ENCODE measurements at regions of chr6 and their contacts with region 1.

Region 1: DNA sequence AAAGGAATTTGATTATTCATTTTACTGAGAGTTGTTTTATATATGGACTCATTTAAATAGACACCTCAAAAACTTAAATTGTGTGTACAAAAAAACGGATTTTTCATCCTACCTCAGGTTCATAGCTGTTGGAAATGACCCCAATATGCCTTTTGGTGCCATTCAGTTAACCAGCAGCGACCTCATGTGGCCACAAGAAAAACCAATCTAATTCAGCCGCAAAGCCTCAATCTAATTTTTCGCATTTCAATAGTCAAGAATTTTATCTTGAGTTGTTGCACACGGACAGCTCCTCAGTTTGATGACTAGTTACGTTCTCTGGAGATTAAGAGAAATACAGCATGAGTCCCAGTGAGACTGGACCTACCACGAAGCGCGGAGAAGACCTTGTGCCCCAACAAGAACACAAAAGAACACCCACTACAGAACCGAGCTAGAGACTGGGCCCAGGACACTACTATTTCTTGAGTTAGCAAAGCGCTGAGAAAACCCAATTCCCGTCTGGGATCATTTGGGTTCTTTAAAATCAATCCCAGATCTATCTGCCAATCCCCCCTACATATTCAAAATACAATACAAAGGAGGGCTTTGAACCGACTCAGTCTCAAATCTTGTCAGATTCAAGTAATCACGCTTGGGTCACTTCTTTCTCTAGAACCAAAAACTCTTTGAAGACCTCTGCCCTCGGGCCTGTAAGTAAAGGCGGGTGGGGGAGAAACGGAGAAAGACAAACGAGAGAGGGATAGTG is 1.1 kb downstream of the TCP11 start:
- DNase-seq: peak in 3 of 5 donors; percentile 60 to 89 (median 84)
- H3K4me3 ChIP-seq: no peak overlapping the region
- H3K27ac ChIP-seq: no peak overlapping the region
- H3K4me1 ChIP-seq: peaks cover 0 to 2% (median 0%) of the 10 kb centered on the region in 3 donors
- H3K27me3 ChIP-seq: no peaks in the 10 kb centered on the region
- CTCF ChIP-seq: peak; percentile 92

Region 2: DNA sequence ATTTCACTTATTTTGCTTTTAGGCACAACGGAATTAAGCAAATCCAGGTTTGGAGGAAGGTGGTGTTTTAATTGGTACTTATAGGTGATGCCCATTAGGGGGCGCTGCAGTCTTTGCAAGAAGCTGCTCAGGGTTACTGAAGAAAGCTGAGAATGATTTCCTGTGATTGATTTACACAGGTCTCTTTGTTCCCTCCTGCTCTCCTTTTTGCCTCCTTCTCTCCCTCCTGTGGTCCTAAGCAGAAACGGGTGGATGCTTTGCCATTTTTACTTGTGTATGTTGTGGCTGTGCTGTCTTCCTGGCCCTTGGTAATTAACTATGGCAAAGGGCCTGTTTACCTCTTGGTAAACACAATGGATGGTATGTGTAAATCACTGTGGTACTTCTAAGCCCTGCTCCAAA is 153.2 kb before region 1 on chr6:
- intact Hi-C with region 1: loop called (anchors 5 kb)
- DNase-seq: peak in 4 of 5 donors; percentile 78 to 95 (median 85)
- H3K4me3 ChIP-seq: no peak overlapping the region
- H3K27ac ChIP-seq: no peak overlapping the region
- H3K4me1 ChIP-seq: peaks cover 0 to 5% (median 0%) of the 10 kb centered on the region in 3 donors
- H3K27me3 ChIP-seq: no peaks in the 10 kb centered on the region
- CTCF ChIP-seq: peak; percentile 66

Region 3: DNA sequence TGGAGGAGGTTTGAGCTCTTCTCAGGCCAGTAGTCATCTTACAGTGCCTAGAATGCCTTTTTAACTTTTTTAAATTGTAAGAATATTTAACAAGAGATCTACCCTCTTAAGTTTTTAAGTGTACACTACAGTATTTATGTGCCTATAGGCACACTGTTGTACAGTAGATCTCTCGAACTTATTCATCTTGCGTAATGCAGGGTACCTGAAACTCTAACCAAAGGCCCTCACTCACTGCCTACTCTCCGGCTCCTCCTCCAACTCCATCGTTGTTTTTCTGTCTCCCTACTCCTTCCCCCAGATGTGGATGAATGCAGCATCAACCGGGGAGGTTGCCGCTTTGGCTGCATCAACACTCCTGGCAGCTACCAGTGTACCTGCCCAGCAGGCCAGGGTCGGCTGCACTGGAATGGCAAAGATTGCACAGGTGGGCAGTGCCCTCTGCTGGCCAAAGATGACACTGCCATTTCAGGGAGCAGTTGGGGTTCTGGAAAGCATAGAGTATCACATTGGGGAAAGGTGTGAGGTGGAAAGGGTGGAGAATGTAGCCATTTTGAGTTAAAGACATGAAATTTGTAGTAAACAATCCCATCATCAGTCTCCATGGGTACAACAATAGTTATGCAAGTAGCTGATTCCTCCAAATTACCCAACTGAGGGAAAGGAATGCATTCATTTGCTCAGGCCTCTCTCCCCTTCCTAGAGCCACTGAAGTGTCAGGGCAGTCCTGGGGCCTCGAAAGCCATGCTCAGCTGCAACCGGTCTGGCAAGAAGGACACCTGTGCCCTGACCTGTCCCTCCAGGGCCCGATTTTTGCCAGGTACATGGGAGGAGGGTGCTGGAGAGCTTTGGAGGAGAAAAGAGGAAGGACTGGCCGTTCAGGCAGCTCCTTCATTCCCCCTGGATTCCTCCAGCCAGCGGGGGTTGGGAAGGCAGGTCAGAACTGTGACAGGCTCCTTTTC is 101.0 kb after region 1 on chr6:
- intact Hi-C with region 1: loop called (anchors 10 kb)
- DNase-seq: peak; percentile 86 to 90 (median 89)
- H3K4me3 ChIP-seq: no peak overlapping the region
- H3K27ac ChIP-seq: no peak overlapping the region
- H3K4me1 ChIP-seq: peaks cover 0 to 5% (median 0%) of the 10 kb centered on the region in 3 donors
- H3K27me3 ChIP-seq: no peaks in the 10 kb centered on the region
- CTCF ChIP-seq: peak; percentile 97

Region 4: GRCh38 chr6:35534407-35535170 is 394.5 kb after region 1 on chr6:
- intact Hi-C with region 1: no loop called
- DNase-seq: peak in 4 of 5 donors; percentile 14 to 62 (median 40)
- H3K4me3 ChIP-seq: no peak overlapping the region
- H3K27ac ChIP-seq: no peak overlapping the region
- H3K4me1 ChIP-seq: no peaks in the 10 kb centered on the region
- H3K27me3 ChIP-seq: no peaks in the 10 kb centered on the region
- CTCF ChIP-seq: no peak

Measured in kidney (tissue), 22 donors.